ENCODE measurements at regions of chr20 and their contacts with region 1.

Region 1: GRCh38 chr20:59159493-59160376 is 3.9 kb upstream of the ZNF831 start:
- DNase-seq: peak; percentile 68
- ATAC-seq: peak; percentile 80
- H3K4me3 Mint-ChIP-seq: peak overlapping the region; percentile 85
- H3K27ac Mint-ChIP-seq: peak overlapping the region; percentile 95
- H3K4me1 Mint-ChIP-seq: peaks cover 41% of the 10 kb centered on the region
- H3K27me3 Mint-ChIP-seq: peaks cover under 1% of the 10 kb centered on the region

Region 2: GRCh38 chr20:59120491-59120890 is 39.2 kb before region 1 on chr20:
- POLR2A ChIA-PET with region 1: interaction called, 39 read pairs
- DNase-seq: peak; percentile 35
- ATAC-seq: peak; percentile 36
- H3K4me3 Mint-ChIP-seq: peak overlapping the region; percentile 62
- H3K27ac Mint-ChIP-seq: peak overlapping the region; percentile 59
- H3K4me1 Mint-ChIP-seq: peaks cover 55% of the 10 kb centered on the region
- H3K27me3 Mint-ChIP-seq: peaks cover 9% of the 10 kb centered on the region

Region 3: GRCh38 chr20:59145924-59146779 is 13.6 kb before region 1 on chr20:
- POLR2A ChIA-PET with region 1: interaction called, 14 read pairs
- DNase-seq: no peak
- ATAC-seq: peak; percentile 28
- H3K4me3 Mint-ChIP-seq: peak overlapping the region; percentile 75
- H3K27ac Mint-ChIP-seq: peak overlapping the region; percentile 80
- H3K4me1 Mint-ChIP-seq: peaks cover 66% of the 10 kb centered on the region
- H3K27me3 Mint-ChIP-seq: no peaks in the 10 kb centered on the region

Region 4: DNA sequence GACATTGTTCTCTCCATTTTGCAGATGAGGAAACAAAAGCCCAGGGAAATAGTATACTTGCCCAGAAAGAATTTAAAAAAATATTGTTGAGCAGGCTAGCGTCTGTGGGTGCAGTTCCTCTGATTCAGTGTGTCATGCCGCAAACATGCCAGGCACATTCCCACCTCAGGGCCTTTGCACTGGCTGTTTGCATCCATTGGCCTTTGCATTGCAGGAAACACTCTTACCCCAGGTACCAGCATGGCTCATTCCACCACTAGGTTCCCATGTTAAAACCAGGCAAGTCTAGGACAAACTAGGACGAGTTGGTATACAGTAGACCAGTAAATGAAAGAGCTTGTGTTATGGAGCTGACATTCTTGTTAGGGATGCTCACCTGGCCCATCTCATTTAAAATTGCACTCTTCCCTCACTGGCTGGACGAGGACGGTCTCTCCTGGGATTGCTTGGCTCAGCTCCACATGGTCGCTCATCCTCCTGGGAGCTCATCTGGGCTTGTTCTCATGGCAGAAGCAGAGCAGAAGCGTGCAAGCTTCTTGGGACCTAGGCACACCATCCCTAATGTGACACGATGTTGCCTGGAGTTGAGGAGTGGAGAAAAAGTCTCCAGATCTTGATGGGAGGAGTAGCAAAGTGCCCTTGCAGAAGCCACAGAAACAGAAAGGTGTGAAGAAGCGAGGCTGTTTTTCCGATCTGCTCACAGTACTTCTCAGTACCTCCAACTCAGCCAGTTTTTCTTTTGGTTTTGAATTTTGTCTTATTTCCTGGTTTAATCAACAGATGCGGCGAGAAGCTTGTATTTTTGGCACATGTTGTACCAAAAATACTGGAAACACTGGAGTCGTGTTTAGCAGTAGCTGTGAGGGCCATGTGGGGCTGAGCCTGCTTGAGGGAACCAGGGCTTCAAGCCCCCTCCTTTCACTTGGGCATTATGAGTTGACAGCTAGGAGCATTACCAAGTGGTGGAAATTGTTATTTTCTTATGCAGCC is 17.8 kb after region 1 on chr20:
- POLR2A ChIA-PET with region 1: interaction called, 17 read pairs
- DNase-seq: no peak
- ATAC-seq: peak; percentile 81
- H3K4me3 Mint-ChIP-seq: peak overlapping the region; percentile 57
- H3K27ac Mint-ChIP-seq: peak overlapping the region; percentile 89
- H3K4me1 Mint-ChIP-seq: peaks cover 45% of the 10 kb centered on the region
- H3K27me3 Mint-ChIP-seq: no peaks in the 10 kb centered on the region

Region 5: GRCh38 chr20:59341805-59342634 is 182.3 kb after region 1 on chr20:
- POLR2A ChIA-PET with region 1: no interaction called
- DNase-seq: no peak
- ATAC-seq: no peak
- H3K4me3 Mint-ChIP-seq: no peak overlapping the region
- H3K27ac Mint-ChIP-seq: no peak overlapping the region
- H3K4me1 Mint-ChIP-seq: peaks cover 2% of the 10 kb centered on the region
- H3K27me3 Mint-ChIP-seq: peaks cover 5% of the 10 kb centered on the region